ENCODE measurements at regions of chr21 and their contacts with region 1.

Region 1: GRCh38 chr21:17393413-17393812 is 119.4 kb upstream of the CXADR start:
- DNase-seq: no peak
- H3K4me3 ChIP-seq: no peak overlapping the region
- H3K27ac ChIP-seq: no peak overlapping the region
- H3K4me1 ChIP-seq: no peaks in the 10 kb centered on the region
- H3K27me3 ChIP-seq: no peaks in the 10 kb centered on the region
- CTCF ChIP-seq: no peak

Region 2: DNA sequence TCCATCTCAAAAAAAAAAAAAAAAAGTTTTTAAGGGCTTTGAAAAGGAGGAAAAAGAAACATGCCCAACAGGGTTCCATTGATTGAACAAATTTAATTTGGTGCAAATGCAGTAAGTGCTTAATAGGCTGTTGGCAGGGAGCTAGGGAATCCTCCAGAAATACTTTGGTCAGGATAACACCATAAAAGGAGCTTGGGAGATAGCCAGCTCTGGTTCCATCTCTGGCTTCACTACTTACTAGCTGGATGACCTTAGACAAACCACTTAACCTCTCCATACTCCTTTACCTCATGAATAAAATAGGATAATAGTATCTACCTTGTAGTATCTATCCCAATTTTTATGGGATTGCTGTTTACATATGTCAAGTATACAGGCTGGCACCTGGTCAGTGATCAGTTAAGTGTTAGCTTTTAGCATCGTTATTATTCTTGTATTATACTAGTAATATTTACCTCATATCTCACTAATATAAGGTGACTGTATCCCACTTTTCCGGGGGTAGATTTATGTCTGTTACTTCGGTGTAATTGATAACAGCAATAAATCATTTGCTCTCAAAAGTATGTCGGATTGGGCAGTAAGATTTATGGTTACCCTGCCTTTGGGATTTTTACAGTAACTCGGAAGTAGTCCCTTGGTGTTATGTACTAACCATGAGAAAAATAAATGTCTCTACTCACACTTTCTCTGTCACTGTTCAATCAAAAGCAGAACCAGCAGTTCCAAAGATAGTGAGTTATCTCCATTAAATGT is 182.8 kb after region 1 on chr21:
- intact Hi-C with region 1: loop called (anchors 10 kb)
- DNase-seq: peak in 2 of 5 donors; percentile 14 to 23
- H3K4me3 ChIP-seq: no peak overlapping the region
- H3K27ac ChIP-seq: no peak overlapping the region
- H3K4me1 ChIP-seq: no peaks in the 10 kb centered on the region
- H3K27me3 ChIP-seq: no peaks in the 10 kb centered on the region
- CTCF ChIP-seq: no peak